ENCODE measurements at regions of chr1 and their contacts with region 1.

Region 1: DNA sequence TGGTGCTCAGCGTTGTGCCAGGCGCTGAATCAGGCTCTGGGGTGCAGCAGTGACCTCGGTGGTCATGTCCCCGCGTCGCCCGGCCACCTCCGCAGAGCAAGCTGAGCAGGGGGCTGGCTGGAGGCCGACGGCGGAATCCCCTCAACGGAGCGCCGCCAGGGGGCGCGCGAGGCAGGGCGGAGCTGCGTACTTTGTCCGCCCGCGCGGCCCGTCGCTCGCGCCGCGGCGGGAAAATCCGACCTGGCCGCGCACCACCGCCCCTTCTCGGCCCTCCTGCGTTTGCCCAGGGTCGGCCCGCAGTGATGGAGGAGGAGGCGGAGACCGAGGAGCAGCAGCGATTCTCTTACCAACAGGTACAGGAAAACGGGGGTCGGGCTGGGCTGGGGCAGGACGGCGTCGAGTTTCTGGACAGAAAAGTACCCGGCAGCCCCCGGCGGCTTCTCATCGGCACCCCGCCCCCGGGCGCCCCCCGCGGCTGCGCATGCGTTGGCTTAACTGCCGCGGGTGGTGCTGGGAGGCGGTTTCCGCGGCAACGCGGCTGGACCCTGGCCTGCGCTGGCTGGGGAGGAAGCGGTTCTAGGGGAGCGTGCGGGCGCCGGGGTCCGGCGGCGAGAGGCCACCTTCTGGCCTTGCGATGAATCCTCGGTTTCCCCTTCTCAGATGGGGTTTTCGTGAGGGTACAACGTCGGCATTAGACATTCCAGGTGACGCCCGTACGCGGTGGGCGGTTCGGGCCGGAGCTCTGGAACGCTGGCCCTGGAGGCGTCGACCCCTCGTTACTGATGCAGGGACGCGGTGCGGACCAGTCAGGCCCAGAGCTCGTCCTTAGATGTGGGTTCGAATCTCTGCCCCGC is at the start of gene CENPS:
- DNase-seq: peak; percentile 99
- CTCF ChIP-seq: peak; percentile 88

Region 2: DNA sequence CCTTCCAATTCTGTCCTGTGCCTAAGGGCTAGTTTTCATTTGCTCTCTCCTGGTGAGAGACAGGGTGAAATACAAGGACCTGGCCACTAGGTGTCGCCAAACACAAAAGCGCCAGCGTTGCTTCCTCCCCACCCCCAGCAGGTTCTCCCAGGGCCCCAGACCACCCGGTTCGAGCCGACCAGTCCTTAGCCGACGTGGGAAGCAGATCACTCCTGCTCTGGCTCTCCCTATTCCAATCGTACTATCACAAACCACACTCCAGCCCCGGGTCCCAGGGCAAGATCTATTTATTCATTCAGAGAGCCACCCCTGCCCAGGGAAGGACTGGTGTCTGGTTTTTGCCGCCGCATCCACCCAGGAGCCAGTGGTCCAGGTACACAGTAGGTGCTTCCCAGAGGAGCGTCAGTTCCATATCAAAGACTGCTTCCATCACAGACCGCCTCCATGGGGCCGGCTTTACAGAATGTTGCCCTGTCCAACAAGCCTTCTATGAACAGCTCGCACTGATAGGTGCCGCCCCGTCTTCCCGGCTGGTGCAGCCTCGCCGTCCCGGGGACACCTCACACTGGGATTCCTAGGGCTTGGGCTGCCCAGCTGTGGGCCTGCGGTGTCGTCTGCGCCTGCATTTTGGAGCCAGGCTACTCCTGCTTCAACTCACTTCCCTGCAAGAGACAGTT is 555.3 kb before region 1 on chr1:
- CTCF ChIA-PET with region 1: interaction called, 31 read pairs
- POLR2A ChIA-PET with region 1: no interaction called
- DNase-seq: peak; percentile 94
- CTCF ChIP-seq: peak; percentile 82

Region 3: DNA sequence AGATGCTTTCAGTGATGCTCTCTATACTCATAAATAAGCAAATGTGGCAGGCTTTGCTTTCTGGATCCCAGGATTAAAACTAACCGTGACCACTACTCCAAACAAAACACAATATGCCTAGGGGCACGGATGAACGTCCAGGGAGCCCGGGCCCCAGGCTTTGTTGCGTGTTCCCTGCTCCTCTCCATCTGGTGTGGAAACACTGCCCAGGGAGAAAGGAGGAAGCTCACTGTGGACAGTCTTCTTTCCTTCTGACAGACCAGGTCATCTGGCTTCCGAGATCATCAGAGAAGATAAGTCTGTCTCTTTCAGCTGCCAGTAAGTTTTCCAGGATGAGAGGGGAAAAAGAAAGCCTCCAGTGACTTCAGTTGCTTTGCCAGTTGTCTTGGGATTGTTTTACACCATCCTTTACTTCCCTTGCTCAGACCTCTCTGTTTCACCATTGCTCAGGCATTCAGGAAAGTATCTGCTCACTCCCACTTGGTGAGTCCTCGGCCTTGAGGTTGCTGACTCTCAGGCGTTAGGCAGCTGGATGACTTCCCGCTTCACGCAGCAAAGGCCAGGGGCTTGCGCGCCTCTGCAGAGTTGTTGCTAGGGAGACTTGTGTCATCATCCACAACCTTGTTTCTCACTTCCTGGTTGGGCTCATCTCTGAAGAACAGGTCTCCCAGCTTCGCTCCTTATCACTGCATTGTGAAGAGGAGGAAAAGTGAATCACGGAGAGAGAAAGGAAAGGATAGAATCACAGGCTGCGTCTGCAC is 52.2 kb before region 1 on chr1:
- CTCF ChIA-PET with region 1: interaction called, 20 read pairs
- POLR2A ChIA-PET with region 1: no interaction called
- DNase-seq: no peak
- CTCF ChIP-seq: no peak

Region 4: DNA sequence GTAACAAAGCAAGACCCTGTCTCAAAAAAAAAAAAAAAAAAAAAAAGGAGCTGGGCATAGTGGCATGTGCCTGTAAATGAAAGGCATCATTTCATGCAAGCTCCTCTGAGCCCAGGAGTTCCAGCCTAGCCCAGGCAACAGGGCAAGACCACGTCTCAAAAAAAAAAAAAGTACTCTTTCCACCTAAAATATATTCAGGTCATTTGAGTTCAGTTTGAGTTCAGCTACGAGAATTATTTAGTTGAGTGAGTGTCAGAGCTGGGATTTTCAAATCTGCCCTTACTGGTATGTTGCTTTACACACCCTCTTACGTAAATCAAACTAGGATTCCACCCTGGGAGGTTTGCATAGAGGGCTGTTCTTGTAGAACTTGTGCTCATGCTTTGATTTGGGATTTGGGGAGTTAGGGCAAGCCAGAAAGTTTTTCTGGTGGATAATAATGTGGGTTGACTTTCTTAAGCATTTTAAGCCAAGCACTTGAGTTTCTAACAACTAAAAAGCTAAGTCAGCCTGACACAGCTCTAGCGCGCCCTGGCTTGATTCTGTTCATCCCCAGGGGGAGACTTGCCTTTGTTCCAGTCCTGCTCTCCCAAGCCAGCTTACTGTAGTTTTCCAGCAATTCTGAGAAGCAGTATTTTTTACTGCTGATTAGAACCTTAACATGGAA is 42.9 kb before region 1 on chr1:
- CTCF ChIA-PET with region 1: interaction called, 13 read pairs
- POLR2A ChIA-PET with region 1: interaction called, 5 read pairs
- DNase-seq: no peak
- CTCF ChIP-seq: no peak

Region 5: GRCh38 chr1:10398734-10399623 is 31.5 kb before region 1 on chr1 and contains the start of gene PGD:
- CTCF ChIA-PET with region 1: interaction called, 10 read pairs
- POLR2A ChIA-PET with region 1: no interaction called
- DNase-seq: peak; percentile 100
- CTCF ChIP-seq: no peak

Region 6: DNA sequence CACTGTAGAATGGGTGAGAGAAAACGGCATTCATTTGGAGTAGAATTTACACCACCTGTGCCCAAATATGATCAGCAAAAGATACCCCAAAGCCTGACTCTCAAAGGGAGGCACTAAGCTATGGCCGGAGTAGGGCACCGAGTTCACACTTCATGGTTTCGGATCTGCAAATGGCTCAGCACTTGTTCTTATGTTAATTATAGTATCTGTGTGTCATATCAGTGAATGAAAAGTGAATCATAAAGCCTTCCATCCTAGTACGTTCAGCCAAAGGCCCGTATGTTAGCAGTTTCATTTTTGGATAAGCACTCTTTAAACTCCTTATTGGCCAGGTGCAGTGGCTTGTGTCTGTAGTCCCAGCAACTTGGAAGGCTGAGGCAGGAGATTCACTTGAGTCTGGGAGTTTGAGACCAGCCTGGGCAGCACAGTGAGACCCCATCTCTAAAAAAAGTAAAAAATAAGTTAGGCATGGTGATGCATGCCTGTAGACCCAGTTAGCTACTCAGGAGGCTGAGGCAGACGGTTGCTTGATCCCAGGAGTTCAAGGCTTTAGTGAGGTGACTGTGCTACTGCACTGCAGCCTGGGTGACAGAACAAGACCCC is 14.5 kb after region 1 on chr1:
- CTCF ChIA-PET with region 1: interaction called, 23 read pairs
- POLR2A ChIA-PET with region 1: no interaction called
- DNase-seq: no peak
- CTCF ChIP-seq: no peak

Region 7: DNA sequence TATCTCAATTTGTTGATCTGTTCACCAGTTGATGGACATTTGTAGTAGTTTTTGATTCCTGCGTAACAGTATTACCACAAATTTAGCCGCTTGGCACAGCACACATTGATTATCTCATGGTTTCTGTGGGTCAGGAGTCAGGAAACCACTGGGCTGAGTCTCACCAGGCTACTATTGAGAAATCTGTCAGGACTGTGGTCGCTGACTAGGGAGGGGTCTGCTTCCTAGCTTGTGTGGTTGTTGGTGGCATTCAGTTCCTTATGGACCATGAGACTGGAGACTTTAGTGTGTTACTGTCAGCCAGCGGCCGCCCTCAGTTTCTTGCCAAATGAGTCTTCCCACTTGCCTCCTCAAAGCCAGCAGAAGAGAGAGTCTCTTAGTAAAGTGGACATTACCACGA is 54.1 kb after region 1 on chr1:
- CTCF ChIA-PET with region 1: interaction called, 147 read pairs
- POLR2A ChIA-PET with region 1: interaction called, 3 read pairs
- DNase-seq: no peak
- CTCF ChIP-seq: no peak

Measured in GM10248 (cell line).